GM12878 (cell line): ENCODE measurements at regions of chr14 and their contacts with region 1.

Region 1: GRCh38 chr14:54435500-54435981 is 5.6 kb downstream of the CNIH1 start:
- DNase-seq: no peak
- ATAC-seq: peak; percentile 68
- H3K4me3 ChIP-seq: peak overlapping the region; percentile 65
- H3K27ac ChIP-seq: peak overlapping the region; percentile 64
- H3K4me1 ChIP-seq: peaks cover 13% of the 10 kb centered on the region
- H3K27me3 ChIP-seq: no peaks in the 10 kb centered on the region
- CTCF ChIP-seq: no peak
- EP300 ChIP-seq: peak in 1 of 2 experiments; percentile 22; a peak in 1 of 4 replicates
- POLR2A ChIP-seq: no peak
- RAD21 ChIP-seq: no peak

Region 2: DNA sequence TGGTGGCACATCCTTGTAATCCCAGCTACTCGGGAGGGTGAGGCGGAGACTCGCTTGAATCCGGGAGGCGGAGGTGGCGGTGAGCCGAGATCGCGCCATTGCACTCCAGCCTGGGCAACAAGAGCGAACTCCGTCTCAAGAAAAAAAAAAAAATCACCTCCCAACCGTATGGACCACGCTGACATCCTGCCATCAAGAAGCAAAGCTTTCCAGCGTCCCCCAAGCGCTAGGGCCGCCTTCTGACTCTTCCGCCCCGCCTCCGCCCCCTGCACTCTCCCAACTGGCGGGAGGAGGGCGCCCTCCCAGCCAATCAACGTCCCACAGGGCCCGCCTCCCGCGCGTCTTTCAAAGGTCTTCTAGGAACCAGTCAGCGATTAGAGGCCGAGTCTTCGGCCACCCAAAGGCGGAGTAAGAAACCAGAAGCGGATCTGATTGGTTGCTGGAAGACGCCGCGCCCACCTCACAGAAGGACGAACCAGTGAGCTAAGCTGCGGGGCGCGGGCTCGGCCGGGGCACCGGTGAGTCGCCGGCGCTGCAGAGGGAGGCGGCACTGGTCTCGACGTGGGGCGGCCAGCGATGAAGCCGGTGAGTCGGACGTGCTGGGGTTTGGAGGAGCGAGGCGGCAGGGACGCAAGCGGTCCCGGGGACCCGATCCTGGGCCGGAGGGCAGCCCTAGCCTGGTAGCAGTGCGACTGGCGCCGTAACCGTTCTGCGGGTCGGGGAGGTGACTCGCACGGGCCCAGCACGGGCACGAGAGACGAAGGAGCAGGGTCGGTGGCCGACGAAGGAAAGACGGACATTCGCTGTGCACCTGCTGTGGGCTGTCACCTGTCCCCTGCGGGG is 38.8 kb before region 1 on chr14 and contains the start of gene CDKN3:
- CTCF ChIA-PET with region 1: interaction called, 14 read pairs
- POLR2A ChIA-PET with region 1: interaction called, 14 read pairs
- RAD21 ChIA-PET with region 1: interaction called, 16 read pairs
- SMC1A ChIA-PET with region 1: interaction called, 21 read pairs
- in situ Hi-C with region 1: no loop called
- intact Hi-C with region 1: loop called (anchors 5 kb)
- DNase-seq: peak; percentile 95
- ATAC-seq: peak; percentile 97
- H3K4me3 ChIP-seq: peak within 1 kb of the TSS; percentile 75
- H3K27ac ChIP-seq: peak within 1 kb of the TSS; percentile 81
- H3K4me1 ChIP-seq: no peaks in the 10 kb centered on the region
- H3K27me3 ChIP-seq: no peaks in the 10 kb centered on the region
- CTCF ChIP-seq: peak in 2 of 3 experiments; percentile 39 to 50; a peak in 3 of 6 replicates
- EP300 ChIP-seq: no peak
- POLR2A ChIP-seq: peak; percentile 99
- RAD21 ChIP-seq: no peak
- polyA plus RNA-seq, gene CDKN3: 173 to 197 TPM

Region 3: GRCh38 chr14:54420013-54420809 is 15.3 kb before region 1 on chr14:
- CTCF ChIA-PET with region 1: interaction called, 12 read pairs
- POLR2A ChIA-PET with region 1: no interaction called
- RAD21 ChIA-PET with region 1: interaction called, 4 read pairs
- SMC1A ChIA-PET with region 1: interaction called, 15 read pairs
- in situ Hi-C with region 1: no loop called
- intact Hi-C with region 1: no loop called
- DNase-seq: no peak
- ATAC-seq: peak; percentile 78
- H3K4me3 ChIP-seq: no peak overlapping the region
- H3K27ac ChIP-seq: no peak overlapping the region
- H3K4me1 ChIP-seq: no peaks in the 10 kb centered on the region
- H3K27me3 ChIP-seq: no peaks in the 10 kb centered on the region
- CTCF ChIP-seq: peak; percentile 43 to 47 (median 44)
- EP300 ChIP-seq: no peak
- POLR2A ChIP-seq: no peak
- RAD21 ChIP-seq: peak; percentile 20; the same call in 1 of the 2 replicates

Region 4: DNA sequence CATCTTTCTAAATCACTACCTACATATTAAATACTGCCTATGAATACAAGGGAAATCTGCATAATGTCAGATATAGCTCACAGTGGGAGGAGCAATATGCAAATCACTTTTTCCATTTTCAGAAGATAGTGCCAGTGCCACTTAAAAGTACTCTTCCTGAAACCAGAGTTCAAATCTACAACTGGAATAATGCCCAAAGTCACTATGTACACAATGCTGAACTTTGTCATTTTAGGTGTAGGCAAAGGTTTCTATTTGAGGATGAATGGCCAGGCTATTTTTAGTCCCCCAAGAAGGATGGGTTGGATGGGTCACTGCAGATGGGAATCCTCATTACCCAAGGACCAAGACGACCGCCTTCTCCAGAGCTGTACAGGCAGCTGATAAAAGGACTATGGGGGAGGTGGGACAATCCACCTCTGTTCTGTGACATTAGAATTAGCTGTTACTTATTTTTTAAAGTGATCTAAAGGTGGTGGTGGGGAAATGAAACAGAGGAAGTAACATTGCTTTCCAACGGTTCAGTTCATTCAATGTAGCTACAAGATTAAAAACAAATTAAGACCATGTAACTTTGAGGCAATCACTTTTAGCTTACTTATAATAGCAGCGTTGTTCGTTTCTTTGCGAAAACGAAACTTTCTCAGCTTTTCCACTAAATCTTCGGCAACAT is 47.7 kb after region 1 on chr14:
- CTCF ChIA-PET with region 1: interaction called, 6 read pairs
- POLR2A ChIA-PET with region 1: interaction called, 3 read pairs
- RAD21 ChIA-PET with region 1: interaction called, 8 read pairs
- SMC1A ChIA-PET with region 1: interaction called, 13 read pairs
- in situ Hi-C with region 1: no loop called
- intact Hi-C with region 1: loop called (anchors 2 kb)
- DNase-seq: no peak
- ATAC-seq: peak; percentile 44
- H3K4me3 ChIP-seq: peak overlapping the region; percentile 50
- H3K27ac ChIP-seq: peak overlapping the region; percentile 64
- H3K4me1 ChIP-seq: peaks cover 10% of the 10 kb centered on the region
- H3K27me3 ChIP-seq: no peaks in the 10 kb centered on the region
- CTCF ChIP-seq: no peak
- EP300 ChIP-seq: no peak
- POLR2A ChIP-seq: no peak
- RAD21 ChIP-seq: no peak